ENCODE measurements at regions of chr11 and their contacts with region 1.

Region 1: GRCh38 chr11:116641561-116642045 is 131.2 kb downstream of the BUD13 start:
- DNase-seq: no peak
- ATAC-seq: no peak
- H3K4me3 ChIP-seq: no peak overlapping the region
- H3K27ac ChIP-seq: no peak overlapping the region
- H3K4me1 ChIP-seq: no peaks in the 10 kb centered on the region
- H3K27me3 ChIP-seq: no peaks in the 10 kb centered on the region

Region 2: DNA sequence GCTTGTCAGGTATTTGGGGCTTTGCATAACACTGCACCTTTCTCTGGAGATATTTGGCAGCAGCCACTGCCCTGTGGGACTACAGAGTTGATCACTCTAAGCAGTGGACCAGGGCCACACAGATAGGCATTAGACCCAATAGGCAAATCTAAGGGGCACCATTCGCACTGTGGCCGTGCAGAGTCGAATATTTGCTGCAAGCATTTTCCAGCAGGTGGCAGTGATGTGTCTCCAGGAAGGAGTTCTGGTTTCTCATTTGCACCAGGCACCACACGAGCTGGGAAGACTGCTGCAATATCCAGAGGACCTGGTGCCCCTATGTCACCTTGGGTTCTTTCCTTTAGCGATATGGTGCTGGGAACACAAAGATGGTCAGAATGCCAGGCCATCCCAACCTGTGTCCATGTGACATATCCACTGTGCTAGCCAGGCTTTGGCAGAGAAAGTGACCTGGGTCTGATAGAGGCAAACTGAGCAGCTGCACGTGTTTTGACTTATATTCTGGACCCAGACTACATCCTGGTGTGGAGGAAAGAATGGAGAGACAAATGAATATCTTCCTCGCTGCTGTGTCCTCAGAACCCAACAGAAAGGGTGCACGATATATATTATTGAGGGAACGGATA is 187.5 kb before region 1 on chr11:
- intact Hi-C with region 1: loop called in 1 of 2 experiments (anchors 5 kb)
- DNase-seq: peak in 1 of 2 donors; percentile 52
- ATAC-seq: no peak
- H3K4me3 ChIP-seq: no peak overlapping the region
- H3K27ac ChIP-seq: no peak overlapping the region
- H3K4me1 ChIP-seq: no peaks in the 10 kb centered on the region
- H3K27me3 ChIP-seq: peaks cover 0 to 2% of the 10 kb centered on the region in 2 donors

Region 3: DNA sequence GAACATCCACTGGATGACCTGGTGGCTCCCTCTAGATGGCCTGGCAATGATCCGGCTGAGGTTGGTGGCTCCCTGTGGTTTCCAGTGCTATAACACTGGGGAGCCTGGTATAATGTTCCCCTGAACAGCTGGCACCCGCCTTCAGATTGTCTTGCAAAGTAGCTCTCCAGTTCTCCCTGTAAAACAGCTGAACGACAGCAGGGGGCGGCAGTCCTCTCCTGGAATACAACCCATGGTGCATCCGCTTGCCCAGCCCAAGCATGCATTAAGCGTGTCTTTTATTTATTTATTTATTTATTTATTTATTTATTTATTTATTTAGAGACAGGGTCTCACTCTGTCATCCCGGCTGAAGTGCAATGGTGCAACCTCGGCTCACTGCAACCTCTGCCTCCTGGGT is 127.7 kb before region 1 on chr11:
- intact Hi-C with region 1: loop called in 1 of 2 experiments (anchors 5 kb)
- DNase-seq: peak in 1 of 2 donors; percentile 56
- ATAC-seq: no peak
- H3K4me3 ChIP-seq: no peak overlapping the region
- H3K27ac ChIP-seq: no peak overlapping the region
- H3K4me1 ChIP-seq: no peaks in the 10 kb centered on the region
- H3K27me3 ChIP-seq: no peaks in the 10 kb centered on the region

Region 4: DNA sequence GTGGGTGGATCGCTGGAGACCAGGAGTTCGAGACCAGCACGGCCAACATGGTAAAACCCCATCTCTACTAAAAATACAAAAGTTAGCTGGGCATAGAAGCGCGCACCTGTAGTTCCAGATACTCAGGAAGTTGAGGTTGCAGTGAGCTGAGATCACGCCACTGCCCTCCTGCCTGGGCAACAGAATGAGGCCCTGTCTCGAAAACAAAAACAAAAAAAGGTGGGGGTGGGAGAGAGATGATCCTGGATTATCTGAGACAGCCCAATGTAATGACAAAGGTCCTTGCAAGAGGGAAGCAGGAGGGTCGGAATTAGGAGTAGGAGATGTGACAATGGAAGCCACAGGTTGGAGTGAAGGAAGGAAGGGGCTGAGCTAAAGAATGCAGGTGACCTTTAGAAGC is 283.4 kb after region 1 on chr11:
- intact Hi-C with region 1: no loop called
- DNase-seq: no peak
- ATAC-seq: no peak
- H3K4me3 ChIP-seq: no peak overlapping the region
- H3K27ac ChIP-seq: no peak overlapping the region
- H3K4me1 ChIP-seq: no peaks in the 10 kb centered on the region
- H3K27me3 ChIP-seq: no peaks in the 10 kb centered on the region

Measured in aorta (tissue), 5 donors.